Psoas muscle (tissue), 8 donors: ENCODE measurements at regions of chr9 and their contacts with region 1.

Region 1: GRCh38 chr9:69324549-69325401 is at the start of gene ENTREP1:
- DNase-seq: peak; percentile 67 to 87
- ATAC-seq: peak; percentile 89 to 94 (median 94)
- H3K4me3 ChIP-seq: peak within 1 kb of the TSS; percentile 83
- H3K27ac ChIP-seq: peak within 1 kb of the TSS; percentile 96
- H3K4me1 ChIP-seq: peaks cover 10% of the 10 kb centered on the region
- H3K27me3 ChIP-seq: no peaks in the 10 kb centered on the region
- CTCF ChIP-seq: no peak
- total RNA-seq, gene ENTREP1: 19.6 to 35.7 (median 25.3) TPM

Region 2: GRCh38 chr9:69232135-69232534 is 92.6 kb before region 1 on chr9:
- intact Hi-C with region 1: loop called in 1 of 2 experiments (anchors 10 kb)
- DNase-seq: no peak
- ATAC-seq: no peak
- H3K4me3 ChIP-seq: no peak overlapping the region
- H3K27ac ChIP-seq: no peak overlapping the region
- H3K4me1 ChIP-seq: peaks cover 8% of the 10 kb centered on the region
- H3K27me3 ChIP-seq: no peaks in the 10 kb centered on the region
- CTCF ChIP-seq: no peak

Region 3: GRCh38 chr9:69273161-69273560 is 51.6 kb before region 1 on chr9:
- intact Hi-C with region 1: loop called (anchors 5 to 10 kb)
- DNase-seq: no peak
- ATAC-seq: peak; percentile 97 to 99 (median 99)
- H3K4me3 ChIP-seq: peak overlapping the region; percentile 40
- H3K27ac ChIP-seq: peak overlapping the region; percentile 81
- H3K4me1 ChIP-seq: peaks cover 14% of the 10 kb centered on the region
- H3K27me3 ChIP-seq: no peaks in the 10 kb centered on the region
- CTCF ChIP-seq: no peak

Region 4: DNA sequence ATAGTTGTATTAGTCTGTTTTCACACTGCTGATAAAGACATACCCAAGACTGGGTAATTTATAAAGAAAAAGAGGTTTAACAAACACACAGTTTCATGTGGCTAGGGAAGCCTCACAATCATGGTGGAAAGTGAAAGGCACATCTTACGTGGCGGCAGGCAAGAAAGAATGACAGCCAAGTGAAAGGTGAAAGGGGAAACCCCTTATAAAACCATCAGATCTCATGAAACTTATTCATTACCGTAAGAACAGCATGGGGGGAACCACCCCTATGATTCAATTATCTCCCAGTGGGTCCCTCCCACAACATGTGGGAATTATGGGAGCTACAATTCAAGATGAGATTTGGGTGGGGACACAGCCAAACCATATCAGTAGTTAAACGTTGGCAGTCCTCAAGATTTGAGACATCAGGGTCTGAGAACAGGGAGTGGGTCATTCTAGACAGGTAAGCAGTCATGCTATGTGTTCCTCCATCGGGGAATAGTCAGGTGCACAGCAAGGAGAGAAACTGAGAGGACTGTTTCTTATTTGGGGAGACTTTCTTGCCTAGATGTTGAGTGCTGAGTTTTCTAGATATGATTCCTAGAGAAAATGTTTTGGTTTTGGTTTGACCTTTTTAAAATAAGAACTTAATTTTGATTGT is 45.6 kb before region 1 on chr9:
- intact Hi-C with region 1: loop called (anchors 5 to 10 kb)
- DNase-seq: no peak
- ATAC-seq: no peak
- H3K4me3 ChIP-seq: no peak overlapping the region
- H3K27ac ChIP-seq: no peak overlapping the region
- H3K4me1 ChIP-seq: no peaks in the 10 kb centered on the region
- H3K27me3 ChIP-seq: no peaks in the 10 kb centered on the region
- CTCF ChIP-seq: no peak

Region 5: GRCh38 chr9:69346998-69347397 is 22.2 kb after region 1 on chr9:
- intact Hi-C with region 1: no loop called
- DNase-seq: no peak
- ATAC-seq: peak in 3 of 4 donors; percentile 16 to 25 (median 19)
- H3K4me3 ChIP-seq: no peak overlapping the region
- H3K27ac ChIP-seq: peak overlapping the region; percentile 2
- H3K4me1 ChIP-seq: peaks cover 23% of the 10 kb centered on the region
- H3K27me3 ChIP-seq: no peaks in the 10 kb centered on the region
- CTCF ChIP-seq: no peak

Region 6: GRCh38 chr9:69364510-69365150 is 39.9 kb after region 1 on chr9:
- intact Hi-C with region 1: loop called in 1 of 2 experiments (anchors 5 kb)
- DNase-seq: no peak
- ATAC-seq: peak; percentile 73 to 80 (median 76)
- H3K4me3 ChIP-seq: no peak overlapping the region
- H3K27ac ChIP-seq: peak overlapping the region; percentile 75
- H3K4me1 ChIP-seq: peaks cover 40% of the 10 kb centered on the region
- H3K27me3 ChIP-seq: no peaks in the 10 kb centered on the region
- CTCF ChIP-seq: no peak

Region 7: GRCh38 chr9:69376651-69377050 is 51.9 kb after region 1 on chr9:
- intact Hi-C with region 1: loop called in 1 of 2 experiments (anchors 5 kb)
- DNase-seq: peak in 1 of 2 donors; percentile 68
- ATAC-seq: peak; percentile 5 to 54 (median 48)
- H3K4me3 ChIP-seq: peak overlapping the region; percentile 2
- H3K27ac ChIP-seq: peak overlapping the region; percentile 96
- H3K4me1 ChIP-seq: peaks cover 56% of the 10 kb centered on the region
- H3K27me3 ChIP-seq: no peaks in the 10 kb centered on the region
- CTCF ChIP-seq: no peak

Region 8: DNA sequence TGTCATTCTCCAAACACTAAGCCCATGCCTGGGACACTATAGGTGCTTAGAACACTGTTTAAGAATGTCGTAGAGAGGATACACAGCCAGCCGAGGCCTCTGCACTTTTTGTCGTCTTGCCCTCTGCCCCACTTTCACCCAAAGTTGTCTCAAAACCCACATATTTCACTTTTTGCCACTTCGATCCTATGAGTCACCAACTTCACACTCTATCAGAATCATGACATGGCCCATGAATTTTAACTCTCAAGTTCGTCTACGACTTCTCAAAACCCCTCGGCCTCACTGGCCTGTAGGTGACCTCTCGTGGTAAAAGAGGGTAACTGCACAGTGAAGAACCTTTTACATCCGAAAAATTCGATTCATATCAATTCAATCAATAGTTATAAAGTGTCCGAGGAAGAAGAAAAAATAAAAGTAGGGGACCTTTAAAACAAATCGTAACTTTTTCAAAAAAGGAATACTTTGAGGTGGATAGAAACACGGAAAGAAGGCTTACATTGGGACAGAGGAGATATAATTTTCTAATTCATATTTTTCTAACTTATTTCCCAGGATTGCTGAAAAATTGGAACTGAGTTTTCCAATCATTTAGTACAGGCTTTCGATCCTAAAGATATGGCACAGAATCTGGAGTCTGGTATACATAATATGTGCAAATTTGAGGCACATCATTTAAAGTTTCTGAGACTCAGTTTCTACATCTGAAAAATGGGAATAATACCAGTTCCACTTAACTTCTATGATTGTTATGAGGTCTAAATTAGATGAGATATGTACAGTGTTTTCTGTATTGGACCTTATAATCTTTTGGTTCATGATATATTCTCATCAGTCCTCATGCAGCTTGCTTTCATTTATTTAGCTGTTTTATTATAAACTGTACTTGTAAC is 224.8 kb after region 1 on chr9:
- intact Hi-C with region 1: no loop called
- DNase-seq: no peak
- ATAC-seq: peak; percentile 57 to 90 (median 75)
- H3K4me3 ChIP-seq: no peak overlapping the region
- H3K27ac ChIP-seq: no peak overlapping the region
- H3K4me1 ChIP-seq: peaks cover 3% of the 10 kb centered on the region
- H3K27me3 ChIP-seq: no peaks in the 10 kb centered on the region
- CTCF ChIP-seq: peak; percentile 86